ENCODE measurements at regions of chr12 and their contacts with region 1.

Region 1: GRCh38 chr12:12008931-12009611 is 61.7 kb upstream of the BCL2L14 start:
- DNase-seq: peak; percentile 66
- H3K4me3 Mint-ChIP-seq: peak overlapping the region; percentile 68
- H3K27ac Mint-ChIP-seq: peak overlapping the region; percentile 97
- H3K4me1 Mint-ChIP-seq: peaks cover 75% of the 10 kb centered on the region
- H3K27me3 Mint-ChIP-seq: no peaks in the 10 kb centered on the region

Region 2: GRCh38 chr12:11981121-11981733 is 27.8 kb before region 1 on chr12:
- CTCF ChIA-PET with region 1: interaction called, 16 read pairs
- POLR2A ChIA-PET with region 1: interaction called, 3 read pairs
- DNase-seq: peak; percentile 79
- H3K4me3 Mint-ChIP-seq: peak overlapping the region; percentile 11
- H3K27ac Mint-ChIP-seq: peak overlapping the region; percentile 96
- H3K4me1 Mint-ChIP-seq: peaks cover 62% of the 10 kb centered on the region
- H3K27me3 Mint-ChIP-seq: no peaks in the 10 kb centered on the region

Region 3: DNA sequence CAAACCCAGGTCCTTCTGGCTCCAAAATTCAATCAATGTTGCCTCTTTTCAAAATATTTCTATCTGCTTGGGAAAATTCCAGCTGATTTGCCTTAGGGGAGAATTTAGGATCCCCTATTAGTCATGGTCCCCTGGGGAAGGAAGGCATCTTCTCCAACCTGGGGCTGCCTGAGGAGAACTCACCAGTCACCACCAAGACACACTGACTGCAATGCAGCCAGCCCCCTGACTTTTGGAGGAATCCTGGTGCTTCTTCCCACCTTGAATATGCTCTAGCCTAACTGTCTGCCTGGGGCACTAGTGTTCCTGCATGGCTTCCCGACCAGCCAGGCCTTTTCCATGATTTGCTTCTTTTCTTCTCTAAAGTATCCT is 10.1 kb before region 1 on chr12:
- CTCF ChIA-PET with region 1: interaction called, 11 read pairs
- POLR2A ChIA-PET with region 1: no interaction called
- DNase-seq: no peak
- H3K4me3 Mint-ChIP-seq: no peak overlapping the region
- H3K27ac Mint-ChIP-seq: peak overlapping the region; percentile 92
- H3K4me1 Mint-ChIP-seq: peaks cover 41% of the 10 kb centered on the region
- H3K27me3 Mint-ChIP-seq: no peaks in the 10 kb centered on the region

Region 4: GRCh38 chr12:12032851-12033588 is 23.9 kb after region 1 on chr12:
- CTCF ChIA-PET with region 1: interaction called, 23 read pairs
- POLR2A ChIA-PET with region 1: interaction called, 3 read pairs
- DNase-seq: peak; percentile 72
- H3K4me3 Mint-ChIP-seq: peak overlapping the region; percentile 63
- H3K27ac Mint-ChIP-seq: peak overlapping the region; percentile 78
- H3K4me1 Mint-ChIP-seq: peaks cover 21% of the 10 kb centered on the region
- H3K27me3 Mint-ChIP-seq: no peaks in the 10 kb centered on the region

Region 5: DNA sequence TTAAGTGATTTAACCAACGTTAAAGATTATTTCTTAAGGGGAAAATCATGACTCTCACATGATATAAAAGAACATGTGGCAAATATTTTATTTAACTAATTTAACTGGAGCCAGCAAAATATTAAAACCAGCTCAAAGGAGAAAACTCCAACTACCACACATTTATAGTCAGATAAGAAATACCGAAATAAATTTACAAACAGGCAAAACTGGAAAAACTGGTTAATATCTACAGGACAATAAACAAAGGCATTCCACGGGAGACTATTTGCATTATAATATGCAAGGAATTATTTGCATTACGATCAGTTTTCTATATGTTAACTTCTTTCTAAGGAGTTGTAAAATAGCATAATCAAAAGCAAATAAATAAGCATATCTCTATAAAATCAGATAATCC is 47.9 kb after region 1 on chr12:
- CTCF ChIA-PET with region 1: no interaction called
- POLR2A ChIA-PET with region 1: no interaction called
- DNase-seq: no peak
- H3K4me3 Mint-ChIP-seq: no peak overlapping the region
- H3K27ac Mint-ChIP-seq: no peak overlapping the region
- H3K4me1 Mint-ChIP-seq: no peaks in the 10 kb centered on the region
- H3K27me3 Mint-ChIP-seq: no peaks in the 10 kb centered on the region